Caco-2 (cell line): ENCODE measurements at regions of chr15 and their contacts with region 1.

Region 1: DNA sequence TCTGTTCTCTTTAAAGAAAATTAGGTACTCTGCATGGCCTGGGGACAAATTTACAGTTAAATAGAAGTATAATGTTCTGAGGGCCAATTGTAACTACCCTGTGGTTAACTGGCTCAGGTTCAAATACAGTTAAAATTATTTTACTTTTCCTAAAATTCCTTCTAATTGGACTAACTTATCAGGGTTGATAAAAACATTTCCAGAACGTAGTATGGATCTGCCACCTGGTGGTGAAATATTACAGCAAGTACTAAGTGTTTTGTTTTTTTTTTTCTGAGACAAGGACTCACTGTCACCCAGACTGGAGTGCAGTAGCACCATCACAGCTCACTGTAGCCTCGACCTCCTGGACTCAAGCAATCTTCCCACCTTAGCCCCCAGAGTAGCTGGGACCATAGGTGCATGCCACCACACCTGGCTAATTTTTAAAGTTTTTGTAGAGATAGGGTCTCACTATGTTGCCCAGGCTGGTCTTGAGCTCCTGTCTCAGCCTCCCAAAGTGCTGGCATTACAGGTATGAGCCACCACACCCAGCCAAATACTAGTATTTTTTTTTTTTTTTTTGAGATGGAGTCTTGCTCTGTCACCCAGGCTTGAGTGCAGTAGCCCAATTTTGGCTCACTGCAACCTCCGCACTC is 29.2 kb downstream of the NEO1 start:
- DNase-seq: peak in 1 of 2 experiments; percentile 30
- H3K4me3 ChIP-seq: no peak overlapping the region
- H3K4me3 Mint-ChIP-seq: no peak overlapping the region
- H3K27ac Mint-ChIP-seq: no peak overlapping the region
- H3K4me1 ChIP-seq: no peaks in the 10 kb centered on the region
- H3K4me1 Mint-ChIP-seq: no peaks in the 10 kb centered on the region
- H3K27me3 ChIP-seq: no peaks in the 10 kb centered on the region
- H3K27me3 Mint-ChIP-seq: no peaks in the 10 kb centered on the region
- CTCF ChIP-seq: peak; percentile 55 to 67

Region 2: DNA sequence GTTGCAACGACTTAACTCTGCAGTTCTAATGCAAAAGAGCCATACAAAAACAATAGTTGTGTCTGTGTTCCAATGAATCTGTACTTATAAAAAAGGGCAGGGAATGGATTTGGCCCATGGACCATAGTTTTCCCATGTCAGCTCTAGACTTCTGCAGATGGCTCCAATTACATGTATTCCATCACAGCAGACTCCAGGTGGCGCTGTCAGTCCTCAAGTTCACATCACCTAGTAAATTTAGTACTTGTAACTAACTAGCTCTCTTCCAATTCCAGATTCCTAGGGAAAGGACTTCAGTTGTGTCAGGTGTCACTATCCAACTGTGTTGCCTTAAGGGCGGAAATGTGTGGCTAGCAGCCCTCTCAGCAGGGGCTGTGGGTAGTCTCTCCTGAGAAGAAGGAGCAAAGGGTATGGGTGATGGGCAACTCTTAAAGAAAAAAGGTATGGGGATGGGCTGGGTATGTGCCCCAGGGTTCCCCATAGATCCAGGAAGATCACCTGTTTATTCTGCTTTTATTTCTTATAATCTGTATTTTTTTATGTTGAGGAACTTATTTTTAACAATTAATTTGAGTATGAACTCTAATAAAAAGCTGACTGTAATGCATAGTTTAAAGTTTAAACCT is 359.3 kb before region 1 on chr15:
- CTCF ChIA-PET with region 1: interaction called, 6 read pairs
- POLR2A ChIA-PET with region 1: no interaction called
- intact Hi-C with region 1: loop called (anchors 1 kb)
- DNase-seq: peak; percentile 66 to 70
- H3K4me3 ChIP-seq: no peak overlapping the region
- H3K4me3 Mint-ChIP-seq: no peak overlapping the region
- H3K27ac Mint-ChIP-seq: no peak overlapping the region
- H3K4me1 ChIP-seq: peaks cover 7% of the 10 kb centered on the region; the same call in 1 of the 2 replicates
- H3K4me1 Mint-ChIP-seq: peaks cover 8% of the 10 kb centered on the region
- H3K27me3 ChIP-seq: no peaks in the 10 kb centered on the region
- H3K27me3 Mint-ChIP-seq: no peaks in the 10 kb centered on the region
- CTCF ChIP-seq: peak; percentile 74 to 80

Region 3: GRCh38 chr15:72783563-72784237 is 297.7 kb before region 1 on chr15 and contains the start of gene ADPGK:
- CTCF ChIA-PET with region 1: no interaction called
- POLR2A ChIA-PET with region 1: no interaction called
- intact Hi-C with region 1: loop called (anchors 5 kb)
- DNase-seq: peak; percentile 84 to 94
- H3K4me3 ChIP-seq: peak within 1 kb of the TSS; percentile 93
- H3K4me3 Mint-ChIP-seq: peak within 1 kb of the TSS; percentile 95
- H3K27ac Mint-ChIP-seq: peak within 1 kb of the TSS; percentile 94
- H3K4me1 ChIP-seq: 0 out of 2 replicates have a peak, but pooled peaks cover 6% of the 10 kb centered on the region
- H3K4me1 Mint-ChIP-seq: peaks cover 6% of the 10 kb centered on the region
- H3K27me3 ChIP-seq: no peaks in the 10 kb centered on the region
- H3K27me3 Mint-ChIP-seq: peaks cover 5% of the 10 kb centered on the region
- CTCF ChIP-seq: no peak
- total RNA-seq, gene ADPGK: 52.6 and 55.6 TPM in 2 replicates

Region 4: DNA sequence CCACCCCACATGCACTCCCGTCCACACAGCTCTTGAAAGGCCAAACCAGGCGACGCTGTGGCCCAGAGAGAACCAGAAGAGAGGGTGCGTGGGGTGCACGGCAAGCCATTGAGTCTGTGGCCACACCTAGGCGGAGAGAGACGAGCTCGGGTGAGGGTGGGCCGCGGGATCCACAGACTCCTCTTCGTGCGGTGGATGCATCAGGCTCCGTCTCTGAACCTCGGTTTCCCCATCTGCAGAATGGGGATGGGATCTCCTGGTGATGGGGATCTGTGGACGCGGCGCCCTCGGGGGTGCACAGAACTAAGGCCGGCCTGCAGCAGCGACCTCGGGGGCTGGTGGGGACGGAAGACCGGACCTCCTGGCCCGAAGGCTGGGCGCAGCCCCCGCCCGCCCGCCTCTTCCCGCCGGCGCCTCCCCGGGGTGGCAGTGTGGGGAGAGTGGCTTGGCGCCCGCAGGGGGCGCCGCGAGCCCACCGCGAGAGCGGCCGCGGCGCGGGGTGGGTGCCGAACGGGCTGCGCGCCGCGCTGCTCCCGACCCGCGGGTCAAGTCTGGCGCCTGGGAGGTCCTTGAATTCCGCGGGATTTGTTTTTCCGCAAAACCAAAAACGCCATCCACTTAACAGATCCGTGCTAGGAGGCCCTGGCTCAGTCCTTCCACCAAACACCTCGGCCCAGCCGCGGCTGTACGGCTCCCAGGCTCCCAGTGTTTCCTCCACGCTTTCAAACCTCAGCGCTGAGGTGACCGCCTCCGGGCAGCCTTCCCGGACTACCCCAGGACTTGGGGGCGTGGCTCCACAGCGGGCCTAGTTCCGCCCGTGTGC is 284.7 kb before region 1 on chr15:
- CTCF ChIA-PET with region 1: no interaction called
- POLR2A ChIA-PET with region 1: no interaction called
- intact Hi-C with region 1: loop called (anchors 2 kb)
- DNase-seq: peak; percentile 58 to 63
- H3K4me3 ChIP-seq: peak overlapping the region; percentile 50
- H3K4me3 Mint-ChIP-seq: peak overlapping the region; percentile 87
- H3K27ac Mint-ChIP-seq: no peak overlapping the region
- H3K4me1 ChIP-seq: no peaks in the 10 kb centered on the region
- H3K4me1 Mint-ChIP-seq: peaks cover 10% of the 10 kb centered on the region
- H3K27me3 ChIP-seq: no peaks in the 10 kb centered on the region
- H3K27me3 Mint-ChIP-seq: no peaks in the 10 kb centered on the region
- CTCF ChIP-seq: peak; percentile 39 to 51